HEK293T (cell line): ENCODE measurements at regions of chr5 and their contacts with region 1.

Region 1: DNA sequence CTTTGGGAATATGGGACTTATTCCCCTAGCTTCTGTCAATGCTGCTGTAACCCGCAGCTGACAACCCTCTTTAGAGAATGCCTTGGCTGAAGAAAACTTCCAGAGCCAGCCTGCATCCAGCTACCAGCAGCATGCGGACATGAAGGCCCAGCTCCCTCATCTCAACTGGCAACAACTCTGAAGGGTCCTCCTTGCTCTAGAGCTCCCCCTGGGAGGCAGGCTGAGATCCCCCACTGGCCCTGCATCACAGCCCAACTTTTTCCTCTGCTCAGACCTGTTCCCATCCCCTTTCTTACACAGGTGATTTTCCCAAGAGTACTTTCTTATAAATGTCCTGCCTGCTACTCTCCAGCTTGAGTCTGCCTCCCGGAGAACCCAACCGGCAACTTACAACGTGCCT is 18.7 kb upstream of the WNT8A start:
- DNase-seq: peak; percentile 53

Region 2: GRCh38 chr5:138035605-138036537 is 29.2 kb before region 1 on chr5:
- CTCF ChIA-PET with region 1: interaction called, 39 read pairs
- POLR2A ChIA-PET with region 1: interaction called, 6 read pairs
- DNase-seq: peak; percentile 68

Region 3: DNA sequence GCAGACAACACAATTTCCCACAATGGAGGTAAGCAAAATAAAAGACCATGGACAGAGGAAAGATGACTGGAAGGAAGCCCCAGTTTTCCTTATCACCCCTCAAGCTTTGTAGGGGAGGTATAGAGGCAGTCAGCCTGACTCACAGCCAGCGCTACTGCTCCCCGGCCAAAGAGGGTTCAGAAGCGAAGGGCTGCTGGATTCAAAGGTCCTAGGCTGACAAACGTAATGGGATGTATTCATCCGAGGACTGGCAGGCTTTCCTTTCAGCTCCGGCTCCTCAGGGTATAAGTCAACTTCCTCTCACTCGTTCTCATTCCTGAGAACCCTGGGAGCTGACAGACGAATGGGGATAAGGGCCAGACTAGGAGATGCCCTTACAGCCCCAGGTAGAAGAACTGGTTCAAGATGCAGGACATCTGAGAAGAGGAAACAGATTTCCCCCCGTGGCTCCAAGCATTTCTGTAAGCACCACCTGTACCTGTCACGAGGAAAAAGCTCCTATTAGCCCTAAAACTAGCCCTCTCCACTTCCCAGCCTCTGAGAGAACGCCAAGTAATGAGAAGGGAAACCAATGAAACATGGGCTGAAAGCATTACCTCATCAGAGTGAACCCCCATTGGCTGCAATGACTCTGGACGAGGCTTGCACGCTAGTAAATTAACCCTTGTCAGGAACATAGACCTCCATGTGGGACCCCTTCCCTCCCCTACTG is 10.1 kb before region 1 on chr5:
- CTCF ChIA-PET with region 1: interaction called, 18 read pairs
- POLR2A ChIA-PET with region 1: no interaction called
- DNase-seq: no peak

Region 4: GRCh38 chr5:138077065-138077696 is 12.1 kb after region 1 on chr5:
- CTCF ChIA-PET with region 1: interaction called, 12 read pairs
- POLR2A ChIA-PET with region 1: no interaction called
- DNase-seq: peak; percentile 69